GM12878 (cell line): ENCODE measurements at regions of chr4 and their contacts with region 1.

Region 1: DNA sequence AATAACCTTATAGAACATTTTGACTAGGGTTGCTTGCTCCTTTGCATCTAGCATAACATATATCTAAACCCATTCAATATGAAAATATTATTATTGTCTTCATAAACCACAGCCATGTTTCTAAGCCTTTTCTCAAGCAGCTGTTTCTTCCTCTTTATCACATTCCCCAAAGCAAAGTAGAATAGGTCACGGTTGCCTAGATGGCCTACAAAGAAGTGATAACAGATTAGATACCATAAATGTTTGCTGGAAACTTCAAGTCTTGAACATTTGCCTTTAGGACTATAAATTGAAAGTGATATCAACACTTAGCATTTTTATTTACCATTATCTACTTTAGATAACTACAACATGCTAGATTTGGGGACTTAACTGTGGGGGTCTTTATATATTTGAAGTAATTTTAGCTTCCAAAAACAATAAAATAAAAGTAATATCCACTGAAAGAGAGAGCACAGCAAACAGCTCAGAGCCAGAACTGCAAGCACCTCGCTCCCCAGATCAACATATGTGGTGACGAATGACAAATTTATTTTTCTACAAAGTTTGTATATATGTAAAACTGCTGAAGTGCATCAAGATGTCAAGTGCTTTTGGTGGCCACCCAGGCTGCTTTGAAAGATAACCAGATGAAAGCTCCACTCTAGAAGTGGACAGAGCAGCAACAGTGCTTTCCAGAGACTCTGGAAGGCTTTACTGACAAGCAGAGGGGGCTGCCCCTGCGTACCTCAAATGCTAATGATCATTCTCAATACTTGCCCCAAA is 8.0 kb downstream of the HHIP start:
- DNase-seq: no peak
- ATAC-seq: no peak
- H3K4me3 ChIP-seq: no peak overlapping the region
- H3K27ac ChIP-seq: no peak overlapping the region
- H3K4me1 ChIP-seq: no peaks in the 10 kb centered on the region
- H3K27me3 ChIP-seq: peaks cover 0 to 4% of the 10 kb centered on the region in 2 experiments; a peak in 1 of 4 replicates
- CTCF ChIP-seq: no peak
- EP300 ChIP-seq: no peak
- POLR2A ChIP-seq: no peak
- RAD21 ChIP-seq: no peak

Region 2: GRCh38 chr4:144666539-144667175 is 12.7 kb after region 1 on chr4:
- CTCF ChIA-PET with region 1: interaction called, 6 read pairs
- POLR2A ChIA-PET with region 1: no interaction called
- RAD21 ChIA-PET with region 1: no interaction called
- SMC1A ChIA-PET with region 1: interaction called, 12 read pairs
- in situ Hi-C with region 1: no loop called
- intact Hi-C with region 1: no loop called
- DNase-seq: no peak
- ATAC-seq: no peak
- H3K4me3 ChIP-seq: no peak overlapping the region
- H3K27ac ChIP-seq: no peak overlapping the region
- H3K4me1 ChIP-seq: no peaks in the 10 kb centered on the region
- H3K27me3 ChIP-seq: no peaks in the 10 kb centered on the region
- CTCF ChIP-seq: no peak
- EP300 ChIP-seq: no peak
- POLR2A ChIP-seq: no peak
- RAD21 ChIP-seq: no peak